AG04450 (cell line): ENCODE measurements at regions of chr15 and their contacts with region 1.

Region 1: DNA sequence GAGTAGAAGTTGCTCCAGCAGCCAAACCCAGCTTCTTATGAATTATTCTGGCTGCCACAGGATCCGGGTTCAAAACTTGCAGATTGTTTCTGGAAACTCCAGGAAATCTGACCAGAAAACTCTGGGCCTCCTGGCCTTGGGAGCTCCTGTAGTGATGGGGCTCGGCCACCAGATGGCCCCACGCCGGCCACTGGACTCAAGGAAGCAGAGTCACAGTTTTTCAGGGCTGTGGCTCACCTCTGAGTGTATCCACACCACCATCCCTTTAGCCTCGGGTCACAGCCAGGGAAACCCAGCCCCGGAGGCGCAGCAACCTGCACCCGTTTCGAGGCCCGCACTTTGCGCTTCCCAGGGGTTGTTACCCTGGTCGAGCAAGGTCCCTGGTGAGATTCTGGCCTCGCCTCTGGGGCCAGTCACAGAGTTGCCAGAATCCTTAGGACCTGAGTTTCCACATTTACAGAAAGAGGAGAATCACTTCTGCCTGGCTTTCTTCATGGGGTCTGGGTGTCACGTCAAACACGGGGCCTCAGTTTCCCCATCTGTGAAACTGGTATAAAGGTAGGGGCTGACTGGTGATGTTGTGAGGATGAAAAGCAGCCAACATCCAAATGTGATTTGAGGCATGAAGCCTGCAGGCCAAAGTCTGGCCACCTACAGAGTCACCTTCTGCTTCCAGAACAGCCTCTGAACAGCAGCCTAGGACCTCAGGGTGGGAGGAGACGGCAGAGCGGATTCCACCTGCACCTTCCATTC is 53.5 kb upstream of the LCTL start:
- DNase-seq: peak; percentile 38
- H3K4me3 ChIP-seq: no peak overlapping the region
- H3K27ac ChIP-seq: no peak overlapping the region
- H3K27me3 ChIP-seq: no peaks in the 10 kb centered on the region
- CTCF ChIP-seq: peak; percentile 93

Region 2: DNA sequence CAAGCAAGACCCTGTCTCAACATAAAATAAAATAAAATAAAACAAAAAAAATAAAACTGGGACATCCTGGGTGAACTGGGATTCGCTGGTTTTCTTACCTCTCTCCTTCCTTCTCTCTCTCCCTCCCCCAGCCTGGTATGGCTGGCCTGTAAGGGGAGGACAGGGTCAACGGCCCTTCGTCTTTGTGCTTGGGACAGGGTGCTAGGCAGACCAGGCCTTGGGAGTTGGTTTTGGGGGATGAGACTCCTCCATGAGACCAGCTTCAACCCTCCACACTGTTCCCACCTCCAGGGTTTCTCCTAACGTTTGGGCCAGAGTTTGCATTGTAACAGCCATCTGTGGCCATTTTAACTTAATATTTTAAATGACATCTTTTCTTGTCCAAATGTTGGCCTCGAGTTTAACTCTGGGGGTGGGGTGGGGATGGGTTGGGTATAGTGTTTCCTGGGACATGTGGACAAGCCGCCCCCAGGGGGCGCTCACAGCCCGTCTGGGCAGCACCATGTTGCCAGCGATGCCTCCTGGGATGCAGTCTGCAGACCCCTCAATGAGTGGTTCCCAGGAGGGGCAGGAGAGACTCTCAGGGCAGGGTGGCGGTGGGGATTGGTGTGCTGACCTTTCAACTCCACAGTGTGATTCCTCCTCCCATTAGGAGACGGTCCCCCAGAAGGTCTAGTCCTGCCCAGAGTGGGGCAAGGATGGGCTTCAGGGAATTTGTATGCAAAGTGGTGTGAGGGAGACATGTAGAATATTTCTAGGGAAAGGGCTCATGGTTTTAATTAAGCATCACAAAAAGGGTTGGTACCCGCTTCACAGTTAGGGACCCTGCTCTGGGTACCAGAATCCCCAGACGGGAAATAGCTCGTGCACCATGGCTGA is 15.8 kb before region 1 on chr15:
- CTCF ChIA-PET with region 1: interaction called, 14 read pairs
- POLR2A ChIA-PET with region 1: no interaction called
- DNase-seq: peak; percentile 39
- H3K4me3 ChIP-seq: no peak overlapping the region
- H3K27ac ChIP-seq: no peak overlapping the region
- H3K27me3 ChIP-seq: peaks cover 10% of the 10 kb centered on the region
- CTCF ChIP-seq: peak; percentile 88

Region 3: GRCh38 chr15:66630801-66631351 is 11.5 kb after region 1 on chr15:
- CTCF ChIA-PET with region 1: interaction called, 14 read pairs
- POLR2A ChIA-PET with region 1: no interaction called
- DNase-seq: no peak
- H3K4me3 ChIP-seq: no peak overlapping the region
- H3K27ac ChIP-seq: no peak overlapping the region
- H3K27me3 ChIP-seq: no peaks in the 10 kb centered on the region
- CTCF ChIP-seq: no peak

Region 4: DNA sequence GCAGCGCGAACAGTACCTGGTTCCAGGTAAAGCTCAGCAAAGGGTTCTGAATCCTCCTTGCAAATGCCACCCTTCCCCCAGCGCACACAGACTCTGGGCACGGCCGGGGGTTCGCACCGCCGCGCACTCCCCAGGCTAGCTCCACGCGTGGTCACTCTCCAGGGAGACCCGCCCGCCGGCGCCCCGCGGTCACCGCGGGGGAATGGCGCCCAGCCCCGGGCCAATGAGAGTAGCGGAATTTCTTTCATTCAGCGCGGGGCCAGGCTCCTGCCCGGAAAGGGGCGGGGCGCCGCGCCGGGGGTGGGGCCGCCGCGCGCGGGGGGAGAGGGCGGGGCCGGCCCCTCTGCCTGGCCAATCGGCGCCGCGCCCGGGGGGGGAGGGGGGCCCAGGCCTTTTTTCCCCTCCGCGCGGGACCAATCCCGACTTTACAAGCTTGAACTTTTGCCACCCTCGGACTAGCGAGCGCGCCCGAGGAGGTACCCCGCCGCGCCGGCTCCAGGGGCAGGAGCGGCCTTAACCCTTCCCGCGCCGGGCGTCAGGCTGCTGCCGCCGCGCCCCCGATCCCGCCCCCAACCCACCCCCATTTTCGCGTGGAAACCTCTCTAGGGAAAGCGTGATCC is 81.6 kb after region 1 on chr15:
- CTCF ChIA-PET with region 1: interaction called, 44 read pairs
- POLR2A ChIA-PET with region 1: interaction called, 4 read pairs
- DNase-seq: peak; percentile 84
- H3K4me3 ChIP-seq: peak overlapping the region; percentile 67
- H3K27ac ChIP-seq: no peak overlapping the region
- H3K27me3 ChIP-seq: no peaks in the 10 kb centered on the region
- CTCF ChIP-seq: no peak